ENCODE measurements at regions of chr18 and their contacts with region 1.

Region 1: DNA sequence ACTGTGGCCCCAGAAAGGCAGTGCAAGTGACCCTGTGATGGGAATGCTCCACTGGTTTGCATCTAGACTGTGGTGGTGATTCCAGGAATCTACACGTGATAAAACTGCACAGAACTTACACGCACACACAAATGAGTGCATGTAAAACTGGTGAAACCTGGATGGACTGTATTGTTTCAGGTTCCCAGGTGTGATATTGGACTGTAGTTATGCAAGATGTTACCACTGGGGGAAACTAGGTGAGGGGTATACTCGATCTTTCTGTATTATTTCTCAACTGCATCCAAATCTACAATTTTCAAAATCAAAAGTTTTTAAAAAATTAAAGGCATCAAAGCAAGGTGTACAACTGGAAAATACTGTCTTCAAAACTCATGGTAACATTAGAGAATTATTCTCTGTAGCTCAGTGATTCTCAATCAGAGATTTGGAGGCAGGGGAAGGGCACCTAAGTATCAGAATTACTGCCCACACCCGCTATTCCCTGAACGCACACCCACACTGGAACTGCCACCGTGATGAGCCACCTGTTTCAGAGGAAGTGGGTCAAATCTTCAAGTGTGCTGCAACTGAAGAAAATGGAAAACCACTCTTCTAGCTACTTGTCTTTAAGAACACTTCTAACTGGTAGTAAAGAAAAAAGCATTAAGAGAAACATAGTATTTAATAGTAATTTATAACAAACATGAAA is 26.7 kb downstream of the PTPN2 start:
- DNase-seq: no peak
- ATAC-seq: peak; percentile 76
- H3K4me3 ChIP-seq: no peak overlapping the region
- H3K27ac ChIP-seq: peak overlapping the region; percentile 53; the same call in 1 of the 2 replicates
- H3K4me1 ChIP-seq: peaks cover 23% of the 10 kb centered on the region
- H3K27me3 ChIP-seq: no peaks in the 10 kb centered on the region
- CTCF ChIP-seq: peak in 1 of 3 experiments; percentile 18; a peak in 1 of 6 replicates
- EP300 ChIP-seq: no peak
- POLR2A ChIP-seq: no peak
- RAD21 ChIP-seq: no peak

Region 2: DNA sequence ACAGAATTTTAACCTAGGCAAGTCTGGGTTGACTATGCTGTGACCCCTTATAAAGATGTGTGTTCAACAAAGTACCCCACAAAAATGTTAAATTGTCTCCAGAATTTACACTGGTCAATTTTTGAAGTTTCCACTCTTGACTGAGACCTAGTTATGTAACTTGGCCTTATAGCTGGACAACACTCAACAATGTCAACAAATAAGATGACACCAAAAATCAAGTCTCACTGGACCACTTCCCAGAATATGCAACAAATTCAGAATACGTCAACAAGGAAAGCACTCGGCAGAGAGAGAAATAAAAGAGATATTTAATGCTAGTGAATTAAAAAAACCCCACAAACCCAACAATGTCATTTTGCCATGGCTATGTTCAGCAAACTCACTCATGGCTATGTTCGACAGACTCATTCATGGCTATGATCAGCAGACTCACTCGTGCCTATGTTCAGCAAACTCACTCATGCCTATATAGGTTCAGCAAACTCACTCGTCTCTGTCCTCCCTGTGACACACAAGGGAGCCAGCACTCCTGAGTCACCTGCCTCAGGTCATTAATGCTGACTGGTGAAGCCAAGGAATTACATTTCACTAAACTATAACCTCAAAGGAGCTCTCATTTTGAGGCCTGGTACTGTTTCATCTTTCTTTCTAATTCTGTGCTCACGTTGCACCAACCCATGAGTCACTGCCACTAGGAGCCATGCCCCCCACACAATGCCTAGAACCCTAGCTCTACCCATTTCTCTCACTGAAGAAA is 46.0 kb before region 1 on chr18:
- CTCF ChIA-PET with region 1: no interaction called
- POLR2A ChIA-PET with region 1: no interaction called
- RAD21 ChIA-PET with region 1: no interaction called
- SMC1A ChIA-PET with region 1: interaction called, 5 read pairs
- in situ Hi-C with region 1: no loop called
- intact Hi-C with region 1: loop called (anchors 1 kb)
- DNase-seq: no peak
- ATAC-seq: no peak
- H3K4me3 ChIP-seq: no peak overlapping the region
- H3K27ac ChIP-seq: no peak overlapping the region
- H3K4me1 ChIP-seq: no peaks in the 10 kb centered on the region
- H3K27me3 ChIP-seq: no peaks in the 10 kb centered on the region
- CTCF ChIP-seq: no peak
- EP300 ChIP-seq: no peak
- POLR2A ChIP-seq: no peak
- RAD21 ChIP-seq: no peak

Region 3: DNA sequence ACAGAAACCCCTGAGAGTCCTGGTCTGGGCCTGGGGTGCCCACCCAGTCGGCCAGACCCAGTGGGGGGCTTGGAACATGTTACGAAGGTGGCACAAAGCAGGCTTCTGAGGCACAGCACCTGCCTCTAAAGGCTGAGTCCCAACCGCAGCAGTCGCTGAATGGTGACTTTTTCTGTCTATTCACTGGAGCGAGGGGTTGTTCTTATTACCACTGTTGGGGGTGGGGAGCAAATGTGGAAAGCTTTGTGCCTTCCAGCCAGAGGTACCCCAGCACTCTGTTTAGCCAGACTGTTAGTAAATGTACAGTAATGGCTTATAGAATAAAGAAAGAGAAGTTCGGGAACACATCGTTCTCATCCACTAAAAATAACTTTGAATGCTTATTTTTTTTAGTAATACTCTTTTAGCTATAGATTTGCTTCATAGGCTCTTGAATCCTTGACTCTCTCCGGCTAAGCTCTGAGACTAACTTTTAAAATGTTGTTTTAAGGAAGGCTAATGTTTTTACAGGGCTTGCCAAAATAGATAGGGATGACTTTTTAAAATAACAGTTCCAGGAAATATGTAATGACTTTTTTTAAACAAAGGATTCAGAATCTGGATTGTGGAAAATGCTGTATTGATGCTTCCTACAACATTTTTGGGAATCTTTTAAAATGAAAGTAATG is 50.0 kb after region 1 on chr18:
- CTCF ChIA-PET with region 1: no interaction called
- POLR2A ChIA-PET with region 1: no interaction called
- RAD21 ChIA-PET with region 1: no interaction called
- SMC1A ChIA-PET with region 1: no interaction called
- in situ Hi-C with region 1: no loop called
- intact Hi-C with region 1: no loop called
- DNase-seq: no peak
- ATAC-seq: no peak
- H3K4me3 ChIP-seq: no peak overlapping the region
- H3K27ac ChIP-seq: no peak overlapping the region
- H3K4me1 ChIP-seq: no peaks in the 10 kb centered on the region; the same call in 1 of the 2 replicates
- H3K27me3 ChIP-seq: peaks cover 1 to 2% of the 10 kb centered on the region in 2 experiments; a peak in 3 of 4 replicates
- CTCF ChIP-seq: no peak
- EP300 ChIP-seq: no peak
- POLR2A ChIP-seq: no peak
- RAD21 ChIP-seq: no peak

Region 4: GRCh38 chr18:12960853-12961397 is 103.6 kb after region 1 on chr18:
- CTCF ChIA-PET with region 1: no interaction called
- POLR2A ChIA-PET with region 1: no interaction called
- RAD21 ChIA-PET with region 1: no interaction called
- SMC1A ChIA-PET with region 1: no interaction called
- in situ Hi-C with region 1: no loop called
- intact Hi-C with region 1: no loop called
- DNase-seq: no peak
- ATAC-seq: no peak
- H3K4me3 ChIP-seq: no peak overlapping the region
- H3K27ac ChIP-seq: no peak overlapping the region
- H3K4me1 ChIP-seq: no peaks in the 10 kb centered on the region
- H3K27me3 ChIP-seq: no peaks in the 10 kb centered on the region
- CTCF ChIP-seq: no peak
- EP300 ChIP-seq: no peak
- POLR2A ChIP-seq: no peak
- RAD21 ChIP-seq: no peak

Region 5: DNA sequence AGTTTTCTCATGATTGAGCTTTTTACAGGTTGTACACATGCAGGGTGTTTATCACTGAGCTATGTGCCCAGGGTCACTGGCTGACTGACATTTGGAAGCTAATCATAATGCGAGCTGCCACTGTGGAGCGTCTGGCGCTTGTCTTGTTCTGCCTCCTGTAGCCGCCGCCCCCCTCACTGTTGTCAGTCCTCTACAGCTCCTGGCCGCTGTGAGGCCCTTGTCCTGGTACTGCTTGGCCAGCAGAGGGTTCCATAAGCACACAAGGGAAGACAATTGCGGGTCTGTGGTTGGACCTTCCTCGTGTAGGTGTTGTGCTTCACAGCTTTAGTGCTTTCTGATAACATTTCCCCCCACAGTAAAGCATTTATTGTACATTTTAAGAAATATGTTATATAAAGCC is 255.6 kb after region 1 on chr18:
- CTCF ChIA-PET with region 1: no interaction called
- POLR2A ChIA-PET with region 1: no interaction called
- RAD21 ChIA-PET with region 1: no interaction called
- SMC1A ChIA-PET with region 1: no interaction called
- in situ Hi-C with region 1: no loop called
- intact Hi-C with region 1: no loop called
- DNase-seq: no peak
- ATAC-seq: peak; percentile 63
- H3K4me3 ChIP-seq: no peak overlapping the region
- H3K27ac ChIP-seq: no peak overlapping the region
- H3K4me1 ChIP-seq: no peaks in the 10 kb centered on the region
- H3K27me3 ChIP-seq: no peaks in the 10 kb centered on the region
- CTCF ChIP-seq: peak in 2 of 3 experiments; percentile 23 to 24; a peak in 2 of 6 replicates
- EP300 ChIP-seq: no peak
- POLR2A ChIP-seq: no peak
- RAD21 ChIP-seq: peak; percentile 20; the same call in 1 of the 2 replicates

Measured in GM12878 (cell line).